Sigmoid colon (tissue), 7 donors: ENCODE measurements at regions of chr5 and their contacts with region 1.

Region 1: DNA sequence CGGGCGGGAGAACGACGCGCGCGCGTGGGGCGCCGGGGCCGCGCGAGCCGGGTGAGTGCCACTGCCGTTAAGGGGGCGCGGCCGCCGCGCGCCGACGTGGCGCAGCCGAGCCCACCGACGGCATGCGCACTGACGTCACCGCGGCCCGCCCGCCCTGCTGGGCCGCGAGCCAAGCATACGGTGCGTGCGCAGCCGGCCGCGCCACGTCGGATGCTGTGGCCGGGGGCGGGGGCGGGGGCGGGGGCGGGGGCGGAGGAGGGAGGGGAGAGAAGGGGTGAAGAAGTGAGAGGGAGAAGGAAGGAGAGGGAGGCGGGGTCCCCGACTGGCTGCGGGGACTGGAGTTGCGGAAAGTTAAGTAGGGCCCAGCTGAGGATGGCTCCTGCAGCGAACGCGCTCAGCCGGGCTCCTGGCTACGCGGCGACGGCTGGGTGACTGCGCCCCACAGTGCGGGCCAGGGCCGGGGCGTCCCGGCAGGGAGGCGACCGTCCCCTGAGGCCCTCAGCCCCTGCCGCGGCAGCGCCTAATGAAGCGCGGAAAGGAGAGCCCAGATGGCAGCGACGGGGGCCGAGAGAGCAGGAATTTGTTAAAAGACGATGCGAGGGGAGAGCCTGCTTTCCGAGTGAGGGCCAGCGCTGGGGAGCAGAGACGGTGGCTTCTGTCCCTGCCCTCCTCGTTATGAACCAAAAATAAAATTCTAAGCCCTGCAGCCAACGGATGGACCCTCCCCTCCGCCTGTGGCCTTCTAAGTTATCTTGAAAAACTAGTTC is at the start of gene DAP:
- DNase-seq: peak; percentile 91
- H3K4me3 ChIP-seq: peak within 1 kb of the TSS; percentile 69 to 90 (median 83)
- H3K27ac ChIP-seq: peak within 1 kb of the TSS; percentile 91 to 98 (median 95)
- H3K4me1 ChIP-seq: peaks cover 0 to 40% (median 30%) of the 10 kb centered on the region in 4 donors
- H3K27me3 ChIP-seq: no peaks in the 10 kb centered on the region
- CTCF ChIP-seq: no peak
- EP300 ChIP-seq: no peak
- POLR2A ChIP-seq: peak in 1 of 2 donors; percentile 30
- total RNA-seq, gene DAP: 25.7 to 38.5 (median 27.1) TPM

Region 2: GRCh38 chr5:9507974-9508373 is 1253.4 kb before region 1 on chr5:
- intact Hi-C with region 1: no loop called
- DNase-seq: no peak
- H3K4me3 ChIP-seq: no peak overlapping the region
- H3K27ac ChIP-seq: no peak overlapping the region
- H3K4me1 ChIP-seq: peaks cover 0 to 16% (median 8%) of the 10 kb centered on the region in 4 donors
- H3K27me3 ChIP-seq: no peaks in the 10 kb centered on the region
- CTCF ChIP-seq: no peak
- EP300 ChIP-seq: no peak
- POLR2A ChIP-seq: no peak

Region 3: GRCh38 chr5:10249948-10250803 is 511.2 kb before region 1 on chr5 and contains the start of gene CCT5:
- intact Hi-C with region 1: loop called (anchors 10 kb)
- DNase-seq: peak; percentile 98
- H3K4me3 ChIP-seq: peak within 1 kb of the TSS; percentile 73 to 93 (median 84)
- H3K27ac ChIP-seq: peak within 1 kb of the TSS; percentile 93 to 96 (median 94)
- H3K4me1 ChIP-seq: peaks cover 0 to 31% (median 23%) of the 10 kb centered on the region in 4 donors
- H3K27me3 ChIP-seq: no peaks in the 10 kb centered on the region
- CTCF ChIP-seq: no peak
- EP300 ChIP-seq: peak in 1 of 4 donors; percentile 65
- POLR2A ChIP-seq: peak in 1 of 2 donors; percentile 62
- total RNA-seq, gene CCT5: 63.4 to 124 (median 107) TPM

Region 4: GRCh38 chr5:10552183-10553143 is 208.9 kb before region 1 on chr5:
- intact Hi-C with region 1: no loop called
- DNase-seq: peak; percentile 52
- H3K4me3 ChIP-seq: no peak overlapping the region
- H3K27ac ChIP-seq: peak overlapping the region in 3 of 4 donors; percentile 35 to 51 (median 45)
- H3K4me1 ChIP-seq: peaks cover 0 to 4% (median 0%) of the 10 kb centered on the region in 4 donors
- H3K27me3 ChIP-seq: peaks cover 0 to 39% (median 3%) of the 10 kb centered on the region in 3 donors
- CTCF ChIP-seq: no peak
- EP300 ChIP-seq: no peak
- POLR2A ChIP-seq: no peak

Region 5: DNA sequence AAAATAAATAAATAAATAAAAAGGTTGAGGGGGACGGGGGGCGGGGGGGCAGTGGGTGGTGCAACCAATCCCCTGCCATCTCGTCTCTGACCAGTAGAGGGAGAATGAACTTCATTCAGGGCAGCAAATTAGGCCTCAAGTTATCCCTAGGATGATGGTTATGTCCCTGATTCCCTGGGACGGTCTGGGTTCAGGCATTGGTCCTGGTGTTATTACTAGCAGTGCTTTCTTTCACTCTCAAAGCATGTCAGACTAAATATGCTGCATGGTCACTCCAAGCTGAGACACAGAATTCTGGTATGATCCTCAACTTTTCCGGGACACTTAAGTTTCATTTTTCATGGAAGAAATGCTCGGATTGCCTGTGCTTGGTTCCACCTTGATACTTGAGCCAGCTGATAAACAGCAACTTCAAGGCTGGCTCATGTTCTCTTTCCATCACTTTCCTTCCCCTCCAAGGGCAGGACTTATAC is 59.7 kb before region 1 on chr5:
- intact Hi-C with region 1: loop called (anchors 5 kb)
- DNase-seq: no peak
- H3K4me3 ChIP-seq: no peak overlapping the region
- H3K27ac ChIP-seq: no peak overlapping the region
- H3K4me1 ChIP-seq: peaks cover 0 to 22% (median 15%) of the 10 kb centered on the region in 4 donors
- H3K27me3 ChIP-seq: no peaks in the 10 kb centered on the region
- CTCF ChIP-seq: peak in 1 of 4 experiments; percentile 64
- EP300 ChIP-seq: no peak
- POLR2A ChIP-seq: no peak